Endothelial cell of umbilical vein (primary cell): ENCODE measurements at regions of chr20 and their contacts with region 1.

Region 1: DNA sequence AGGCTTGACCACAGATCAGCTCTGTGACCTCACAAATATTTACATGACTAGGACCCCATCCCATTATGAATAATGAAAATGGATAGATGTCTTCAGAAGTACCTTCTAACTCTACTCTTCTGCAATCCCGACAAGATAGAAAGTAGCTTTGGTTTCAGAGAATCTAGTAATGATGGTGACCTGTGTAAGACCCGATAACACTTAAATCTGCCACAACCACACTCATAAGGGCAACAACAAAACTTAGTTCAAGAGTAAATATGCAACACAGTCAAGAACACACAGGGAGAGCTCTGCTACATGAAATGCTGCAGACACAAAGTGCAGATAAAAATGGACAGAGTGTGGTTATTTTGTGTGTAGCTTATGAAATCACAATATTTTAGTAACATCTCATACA is 9.6 kb downstream of the CHD6 start:
- DNase-seq: no peak
- H3K4me3 ChIP-seq: no peak overlapping the region
- H3K27ac ChIP-seq: no peak overlapping the region
- H3K4me1 ChIP-seq: no peaks in the 10 kb centered on the region
- H3K27me3 ChIP-seq: no peaks in the 10 kb centered on the region
- CTCF ChIP-seq: no peak
- POLR2A ChIP-seq: no peak

Region 2: DNA sequence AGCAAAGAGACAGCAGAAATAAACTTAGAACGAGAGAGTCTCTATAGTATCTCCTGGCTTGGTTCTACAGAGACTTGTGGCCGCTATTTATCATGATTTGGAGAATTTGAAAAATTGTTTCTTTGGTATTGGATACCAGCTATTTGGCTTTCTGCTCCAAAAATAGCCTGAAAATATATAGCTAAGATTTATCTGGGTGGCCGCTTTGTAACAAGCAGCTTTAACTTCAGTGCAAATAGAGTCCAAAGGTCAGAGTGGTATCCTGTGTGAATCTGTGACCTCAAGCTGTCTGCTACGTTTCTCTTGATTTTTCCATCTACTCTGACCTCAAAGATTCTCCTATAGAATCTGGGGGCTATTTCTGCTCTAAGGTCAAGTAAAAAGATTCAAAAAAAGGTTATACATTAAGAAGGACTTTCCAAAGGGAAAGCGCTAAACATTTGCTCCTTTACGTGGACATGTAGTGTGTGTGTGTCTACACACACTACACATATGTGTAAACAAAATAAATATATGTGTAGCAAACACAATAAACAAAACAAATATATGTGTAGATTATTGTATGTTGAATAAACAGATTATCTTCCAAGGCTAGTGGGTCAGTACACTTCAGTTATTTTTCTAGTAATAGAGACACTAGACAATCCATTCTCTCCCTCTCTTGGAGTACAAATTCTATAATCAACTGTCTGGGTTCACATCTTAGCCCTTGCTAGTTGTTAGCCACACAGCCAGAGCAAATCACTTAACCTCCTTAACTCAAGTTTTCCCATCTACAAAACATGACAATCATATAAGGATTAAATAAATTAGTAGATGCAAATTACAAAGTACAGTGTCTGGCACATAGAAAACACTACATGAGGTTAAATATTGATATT is 31.2 kb before region 1 on chr20:
- CTCF ChIA-PET with region 1: no interaction called
- POLR2A ChIA-PET with region 1: interaction called, 10 read pairs
- dilution Hi-C with region 1: no loop called
- intact Hi-C with region 1: no loop called
- DNase-seq: peak; percentile 34
- H3K4me3 ChIP-seq: no peak overlapping the region
- H3K27ac ChIP-seq: no peak overlapping the region
- H3K4me1 ChIP-seq: peaks cover 27% of the 10 kb centered on the region
- H3K27me3 ChIP-seq: no peaks in the 10 kb centered on the region
- CTCF ChIP-seq: no peak
- POLR2A ChIP-seq: no peak